Gastrocnemius medialis (tissue), 4 donors: ENCODE measurements at regions of chr13 and their contacts with region 1.

Region 1: GRCh38 chr13:27523346-27524073 is 73.1 kb upstream of the MTIF3 start:
- DNase-seq: no peak
- ATAC-seq: no peak
- H3K4me3 ChIP-seq: no peak overlapping the region
- H3K27ac ChIP-seq: no peak overlapping the region
- H3K4me1 ChIP-seq: no peaks in the 10 kb centered on the region
- H3K27me3 ChIP-seq: peaks cover 4 to 12% (median 10%) of the 10 kb centered on the region in 3 donors
- CTCF ChIP-seq: no peak
- POLR2A ChIP-seq: no peak

Region 2: DNA sequence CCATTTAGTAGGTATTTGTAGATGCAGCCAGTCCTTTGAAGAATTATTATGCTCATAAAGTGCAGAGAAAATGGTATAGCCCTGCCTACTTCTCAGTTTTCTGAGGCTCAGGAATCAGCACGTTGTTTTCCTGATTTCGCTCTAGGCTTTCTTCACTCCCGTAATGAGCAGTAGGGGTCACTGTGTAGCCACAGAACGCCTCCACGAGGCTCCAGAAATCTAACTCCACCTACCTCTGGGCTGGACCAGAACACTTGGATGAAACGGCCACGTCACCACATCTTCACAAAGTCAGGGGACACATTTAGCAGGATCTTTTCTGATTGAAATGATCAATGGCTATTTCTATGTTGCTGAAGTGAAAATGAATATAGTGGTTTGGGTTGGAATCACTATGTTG is 148.9 kb before region 1 on chr13:
- in situ Hi-C with region 1: loop called in 1 of 4 experiments (anchors 10 kb)
- intact Hi-C with region 1: no loop called
- DNase-seq: peak; percentile 23 to 33
- ATAC-seq: peak; percentile 88 to 94
- H3K4me3 ChIP-seq: no peak overlapping the region
- H3K27ac ChIP-seq: no peak overlapping the region
- H3K4me1 ChIP-seq: no peaks in the 10 kb centered on the region
- H3K27me3 ChIP-seq: peaks cover 0 to 8% (median 6%) of the 10 kb centered on the region in 3 donors
- CTCF ChIP-seq: peak; percentile 35 to 76 (median 54)
- POLR2A ChIP-seq: no peak

Region 3: GRCh38 chr13:27620377-27621115 is 97.0 kb after region 1 on chr13 and contains the start of gene LNX2:
- in situ Hi-C with region 1: no loop called
- intact Hi-C with region 1: no loop called
- DNase-seq: peak; percentile 98 to 99
- ATAC-seq: peak; percentile 72 to 73
- H3K4me3 ChIP-seq: peak within 1 kb of the TSS; percentile 69 to 98 (median 90)
- H3K27ac ChIP-seq: peak within 1 kb of the TSS; percentile 95 to 100 (median 99)
- H3K4me1 ChIP-seq: peaks cover 30 to 44% of the 10 kb centered on the region in 2 donors
- H3K27me3 ChIP-seq: no peaks in the 10 kb centered on the region
- CTCF ChIP-seq: peak in 2 of 5 experiments; percentile 24 to 29
- POLR2A ChIP-seq: peak; percentile 92 to 94
- total RNA-seq, gene LNX2: 5.0 to 7.1 (median 6.2) TPM

Region 4: DNA sequence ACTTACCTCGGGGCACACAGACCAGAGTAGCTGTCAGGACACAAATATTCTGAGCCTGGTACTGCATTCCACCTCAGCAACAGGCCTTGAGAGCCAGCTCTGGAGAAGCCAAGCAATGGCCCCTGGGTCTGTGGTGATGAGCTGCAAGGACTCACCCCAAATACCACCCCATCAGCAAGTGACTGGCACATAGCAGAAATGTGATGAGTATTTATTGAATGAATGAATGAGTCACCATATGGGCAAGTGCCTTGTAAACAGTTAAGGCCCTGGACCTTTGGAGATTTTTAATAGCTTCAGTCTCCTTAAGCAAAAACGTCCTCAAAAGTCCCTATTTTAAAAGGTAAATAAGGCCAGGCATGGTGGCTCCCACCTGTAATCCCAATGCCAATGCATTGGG is 287.0 kb after region 1 on chr13:
- in situ Hi-C with region 1: loop called in 1 of 4 experiments (anchors 10 kb)
- intact Hi-C with region 1: no loop called
- DNase-seq: no peak
- ATAC-seq: no peak
- H3K4me3 ChIP-seq: no peak overlapping the region
- H3K27ac ChIP-seq: no peak overlapping the region
- H3K4me1 ChIP-seq: no peaks in the 10 kb centered on the region
- H3K27me3 ChIP-seq: peaks cover 0 to 31% (median 3%) of the 10 kb centered on the region in 3 donors
- CTCF ChIP-seq: no peak
- POLR2A ChIP-seq: no peak

Region 5: DNA sequence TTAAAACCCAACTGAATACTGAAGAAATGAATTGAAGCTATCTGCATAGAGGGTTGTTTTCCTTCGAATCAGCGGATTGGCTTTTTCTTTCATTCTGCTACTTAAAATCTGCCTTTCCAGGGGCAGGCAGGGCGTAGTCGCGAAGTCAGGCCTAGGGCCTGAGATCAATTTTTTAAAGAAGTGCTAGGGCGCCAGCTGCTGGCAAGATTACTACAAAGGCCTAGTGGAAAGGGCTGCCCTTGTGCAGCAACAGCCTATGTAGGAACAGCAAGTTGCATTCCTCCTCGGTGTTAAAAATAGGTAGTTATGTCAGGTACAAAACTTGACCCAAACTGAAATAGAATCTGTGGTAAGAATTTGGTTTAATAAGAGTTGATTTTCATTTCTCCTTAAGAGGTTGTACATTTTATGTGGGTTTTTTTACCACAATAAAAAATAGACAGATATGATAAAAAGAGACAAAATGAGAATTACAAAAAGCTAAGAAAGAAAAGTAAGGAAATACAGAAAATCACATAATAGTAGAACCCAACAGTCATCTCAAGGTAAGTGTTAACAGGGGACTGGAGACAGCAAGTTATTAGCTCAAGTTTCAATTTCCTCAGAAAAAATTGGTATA is 474.5 kb after region 1 on chr13:
- in situ Hi-C with region 1: loop called in 2 of 4 experiments (anchors 25 kb)
- intact Hi-C with region 1: no loop called
- DNase-seq: no peak
- ATAC-seq: no peak
- H3K4me3 ChIP-seq: no peak overlapping the region
- H3K27ac ChIP-seq: no peak overlapping the region
- H3K4me1 ChIP-seq: no peaks in the 10 kb centered on the region
- H3K27me3 ChIP-seq: no peaks in the 10 kb centered on the region
- CTCF ChIP-seq: no peak
- POLR2A ChIP-seq: no peak